PC-3 (cell line): ENCODE measurements at regions of chr17 and their contacts with region 1.

Region 1: DNA sequence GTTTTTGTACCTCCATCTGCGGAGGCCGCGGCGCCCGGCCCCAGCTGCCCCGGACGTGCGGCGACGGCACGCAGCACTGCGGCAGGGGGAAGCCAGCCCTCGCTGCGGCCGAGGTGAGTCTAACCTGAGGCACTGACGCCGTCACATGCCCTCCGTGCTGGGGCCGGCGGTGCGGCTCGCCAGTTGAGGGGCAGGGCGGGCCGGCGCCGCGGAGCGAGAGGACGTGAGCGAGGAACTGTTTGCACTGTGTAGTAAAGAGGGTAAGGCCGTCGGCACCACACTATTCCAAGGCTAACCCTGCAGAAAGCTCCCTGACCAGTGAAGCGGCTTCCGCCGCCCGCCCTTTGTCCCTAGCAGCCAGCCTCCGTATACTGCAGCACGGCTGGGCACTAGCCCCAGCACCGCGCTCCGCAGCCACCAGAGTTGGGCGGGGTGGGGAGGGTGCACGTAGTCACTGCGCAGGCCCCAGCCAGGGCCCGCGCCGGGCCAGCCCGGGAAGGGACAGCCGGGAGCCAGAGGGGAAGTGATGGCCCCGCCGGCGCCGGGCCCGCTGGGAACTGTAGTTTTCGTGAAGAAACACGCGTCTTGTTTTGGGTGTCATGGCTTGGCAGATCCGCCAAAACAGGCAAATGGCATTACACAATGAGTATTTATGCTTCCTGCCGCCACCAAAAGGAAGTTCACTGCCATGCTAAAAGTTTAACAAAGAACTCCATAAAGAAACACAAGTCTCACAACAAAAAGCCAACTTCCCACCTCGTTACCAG is 580 bp upstream of the KANSL1 start:
- DNase-seq: peak; percentile 99
- ATAC-seq: peak; percentile 92
- H3K4me3 ChIP-seq: peak overlapping the region; percentile 87
- H3K27ac ChIP-seq: peak overlapping the region; percentile 83
- H3K4me1 ChIP-seq: peaks cover 24% of the 10 kb centered on the region
- H3K27me3 ChIP-seq: no peaks in the 10 kb centered on the region
- CTCF ChIP-seq: peak; percentile 41; the same call in 1 of the 2 replicates

Region 2: DNA sequence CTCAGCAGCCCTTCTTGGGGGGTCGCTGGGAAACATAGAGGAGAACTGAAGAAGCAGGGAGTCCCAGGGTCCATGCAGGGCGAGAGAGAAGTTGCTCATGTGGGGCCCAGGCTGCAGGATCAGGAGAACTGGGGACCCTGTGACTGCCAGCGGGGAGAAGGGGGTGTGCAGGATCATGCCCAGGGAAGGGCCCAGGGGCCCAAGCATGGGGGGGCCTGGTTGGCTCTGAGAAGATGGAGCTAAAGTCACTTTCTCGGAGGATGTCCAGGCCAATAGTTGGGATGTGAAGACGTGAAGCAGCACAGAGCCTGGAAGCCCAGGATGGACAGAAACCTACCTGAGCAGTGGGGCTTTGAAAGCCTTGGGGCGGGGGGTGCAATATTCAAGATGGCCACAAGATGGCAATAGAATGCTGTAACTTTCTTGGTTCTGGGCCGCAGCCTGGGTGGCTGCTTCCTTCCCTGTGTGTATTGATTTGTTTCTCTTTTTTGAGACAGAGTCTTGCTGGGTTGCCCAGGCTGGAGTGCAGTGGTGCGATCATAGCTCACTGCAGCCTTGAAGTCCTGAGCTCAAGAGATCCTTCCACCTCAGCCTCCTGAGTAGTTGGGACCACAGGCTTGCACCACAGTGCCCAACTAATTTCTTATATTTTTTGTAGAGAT is 191.4 kb before region 1 on chr17:
- CTCF ChIA-PET with region 1: interaction called, 9 read pairs
- POLR2A ChIA-PET with region 1: no interaction called
- intact Hi-C with region 1: loop called (anchors 5 kb)
- DNase-seq: peak; percentile 88
- ATAC-seq: peak; percentile 79
- H3K4me3 ChIP-seq: no peak overlapping the region
- H3K27ac ChIP-seq: no peak overlapping the region
- H3K4me1 ChIP-seq: peaks cover 12% of the 10 kb centered on the region
- H3K27me3 ChIP-seq: no peaks in the 10 kb centered on the region
- CTCF ChIP-seq: peak; percentile 95

Region 3: GRCh38 chr17:46061435-46061834 is 132.4 kb before region 1 on chr17:
- CTCF ChIA-PET with region 1: interaction called, 10 read pairs
- POLR2A ChIA-PET with region 1: no interaction called
- intact Hi-C with region 1: no loop called
- DNase-seq: peak; percentile 69
- ATAC-seq: no peak
- H3K4me3 ChIP-seq: no peak overlapping the region
- H3K27ac ChIP-seq: no peak overlapping the region
- H3K4me1 ChIP-seq: peaks cover 37% of the 10 kb centered on the region
- H3K27me3 ChIP-seq: no peaks in the 10 kb centered on the region
- CTCF ChIP-seq: peak; percentile 68

Region 4: GRCh38 chr17:46139432-46140210 is 54.2 kb before region 1 on chr17:
- CTCF ChIA-PET with region 1: interaction called, 7 read pairs
- POLR2A ChIA-PET with region 1: no interaction called
- intact Hi-C with region 1: loop called (anchors 1 kb)
- DNase-seq: no peak
- ATAC-seq: peak; percentile 73
- H3K4me3 ChIP-seq: no peak overlapping the region
- H3K27ac ChIP-seq: peak overlapping the region; percentile 23
- H3K4me1 ChIP-seq: peaks cover 22% of the 10 kb centered on the region
- H3K27me3 ChIP-seq: no peaks in the 10 kb centered on the region
- CTCF ChIP-seq: no peak

Region 5: DNA sequence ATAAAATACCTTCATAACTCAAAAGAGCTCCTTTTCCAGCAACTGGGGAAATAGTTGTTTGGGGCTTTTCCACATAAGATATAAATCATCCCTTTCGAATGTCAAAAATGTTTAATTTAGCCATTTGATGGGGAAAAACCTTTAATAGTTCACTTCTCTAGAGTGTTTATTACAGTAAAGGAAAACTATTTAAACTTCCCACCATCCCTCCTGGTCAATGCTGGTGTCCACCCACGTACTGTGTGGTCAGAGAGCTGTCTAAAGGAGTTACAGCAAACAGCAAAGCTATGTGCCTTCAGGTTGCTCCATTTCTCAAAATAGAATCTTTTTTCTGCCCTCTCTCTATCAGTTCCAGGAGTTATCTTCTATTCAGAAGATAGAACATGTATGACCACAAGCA is 34.1 kb before region 1 on chr17:
- CTCF ChIA-PET with region 1: no interaction called
- POLR2A ChIA-PET with region 1: no interaction called
- intact Hi-C with region 1: no loop called
- DNase-seq: no peak
- ATAC-seq: 0 out of 2 replicates have a peak, but pooled peaks have one; percentile 19
- H3K4me3 ChIP-seq: no peak overlapping the region
- H3K27ac ChIP-seq: no peak overlapping the region
- H3K4me1 ChIP-seq: peaks cover 8% of the 10 kb centered on the region
- H3K27me3 ChIP-seq: no peaks in the 10 kb centered on the region
- CTCF ChIP-seq: no peak

Region 6: GRCh38 chr17:46212634-46213435 is 19.0 kb after region 1 on chr17:
- CTCF ChIA-PET with region 1: interaction called, 20 read pairs
- POLR2A ChIA-PET with region 1: no interaction called
- intact Hi-C with region 1: loop called (anchors 1 kb)
- DNase-seq: peak; percentile 77
- ATAC-seq: peak; percentile 74
- H3K4me3 ChIP-seq: no peak overlapping the region
- H3K27ac ChIP-seq: no peak overlapping the region
- H3K4me1 ChIP-seq: no peaks in the 10 kb centered on the region
- H3K27me3 ChIP-seq: no peaks in the 10 kb centered on the region
- CTCF ChIP-seq: peak; percentile 87

Region 7: DNA sequence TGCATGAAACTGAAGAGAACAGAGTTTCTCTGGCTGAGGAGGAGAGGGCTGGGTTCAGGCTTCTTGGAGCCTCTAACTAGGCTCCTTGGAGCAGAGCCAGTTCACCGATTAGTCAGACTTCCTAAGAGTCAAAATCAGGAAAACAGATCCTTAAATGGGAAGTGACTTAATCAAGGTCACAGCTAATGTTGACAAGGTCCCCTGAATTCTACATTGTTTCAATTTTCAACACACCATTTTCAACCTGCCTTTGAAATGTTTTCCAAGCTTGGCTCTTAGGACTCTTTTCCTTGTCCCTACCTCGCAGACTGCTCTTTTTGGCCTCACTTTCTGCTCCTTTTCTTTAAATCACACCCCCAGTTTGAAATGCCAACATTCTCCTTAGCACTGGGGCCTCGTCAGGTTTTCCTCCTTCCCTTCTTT is 1031.6 kb after region 1 on chr17:
- CTCF ChIA-PET with region 1: no interaction called
- POLR2A ChIA-PET with region 1: no interaction called
- intact Hi-C with region 1: no loop called
- DNase-seq: peak; percentile 99
- ATAC-seq: peak; percentile 76
- H3K4me3 ChIP-seq: no peak overlapping the region; the same call in 1 of the 2 replicates
- H3K27ac ChIP-seq: peak overlapping the region; percentile 16
- H3K4me1 ChIP-seq: peaks cover 27% of the 10 kb centered on the region
- H3K27me3 ChIP-seq: no peaks in the 10 kb centered on the region
- CTCF ChIP-seq: no peak